ENCODE measurements at regions of chr1 and their contacts with region 1.

Region 1: DNA sequence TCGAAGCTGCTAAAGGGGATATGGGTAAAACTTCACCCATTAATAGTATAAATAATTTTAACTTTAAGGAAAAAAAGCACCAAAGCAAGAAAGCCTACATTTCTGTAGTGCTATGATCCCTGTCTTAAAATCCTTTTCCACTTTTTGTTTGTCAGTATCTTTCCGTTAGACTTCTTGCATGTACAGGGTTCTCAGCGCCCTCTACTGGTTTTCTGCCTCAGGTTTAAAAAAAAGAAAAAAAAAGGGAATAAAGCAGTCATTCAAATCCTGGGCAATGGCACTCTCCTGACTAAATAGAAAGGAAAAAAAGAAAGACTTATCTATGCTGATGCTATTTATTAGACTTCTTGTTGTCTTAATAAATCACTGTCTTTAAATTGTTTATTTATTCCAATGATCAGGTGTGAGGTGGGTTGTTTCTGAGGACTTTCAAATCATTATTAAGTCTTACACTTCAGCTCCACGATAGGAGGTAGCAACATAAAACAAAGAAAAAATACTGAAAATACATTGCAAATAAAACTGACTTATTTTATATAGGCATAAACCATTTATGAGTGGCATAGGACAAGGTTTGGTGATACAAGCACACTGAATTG is 475.4 kb upstream of the NR5A2 start:
- DNase-seq: peak in 1 of 2 donors; percentile 32
- ATAC-seq: peak; percentile 34

Region 2: DNA sequence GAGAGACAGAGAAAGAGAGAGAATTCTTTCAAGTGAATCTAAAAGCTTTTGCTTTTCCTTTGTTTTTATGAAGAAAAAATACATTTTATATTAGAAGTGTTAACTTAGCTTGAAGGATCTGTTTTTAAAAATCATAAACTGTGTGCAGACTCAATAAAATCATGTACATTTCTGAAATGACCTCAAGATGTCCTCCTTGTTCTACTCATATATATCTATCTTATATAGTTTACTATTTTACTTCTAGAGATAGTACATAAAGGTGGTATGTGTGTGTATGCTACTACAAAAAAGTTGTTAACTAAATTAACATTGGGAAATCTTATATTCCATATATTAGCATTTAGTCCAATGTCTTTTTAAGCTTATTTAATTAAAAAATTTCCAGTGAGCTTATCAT is 795.6 kb before region 1 on chr1:
- intact Hi-C with region 1: loop called in 1 of 2 experiments (anchors 10 kb)
- DNase-seq: no peak
- ATAC-seq: peak; percentile 59

Region 3: DNA sequence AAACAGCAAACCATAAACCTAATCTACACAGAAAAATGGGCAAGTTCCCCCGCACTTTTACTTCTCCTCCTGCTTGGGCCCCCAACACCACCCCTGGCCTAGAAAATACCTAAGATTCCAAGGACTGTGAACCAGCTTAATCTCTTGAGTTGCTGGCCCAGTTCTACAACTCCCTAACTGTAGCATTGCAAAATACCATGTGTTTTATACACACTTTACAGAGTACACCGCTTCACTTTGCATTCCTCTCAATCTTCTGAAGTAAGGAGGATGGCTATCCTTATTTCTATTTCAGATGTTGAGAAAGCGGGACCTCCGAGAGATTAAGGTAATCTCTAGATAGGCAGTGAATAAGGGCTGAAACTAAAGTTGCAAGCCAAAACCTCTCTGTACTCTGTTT is 67.2 kb after region 1 on chr1:
- intact Hi-C with region 1: no loop called
- DNase-seq: no peak
- ATAC-seq: no peak

Region 4: GRCh38 chr1:199733125-199733524 is 181.1 kb after region 1 on chr1:
- intact Hi-C with region 1: no loop called
- DNase-seq: no peak
- ATAC-seq: no peak

Measured in left colon (tissue), 2 donors.